Endothelial cell of umbilical vein (primary cell): ENCODE measurements at regions of chr17 and their contacts with region 1.

Region 1: DNA sequence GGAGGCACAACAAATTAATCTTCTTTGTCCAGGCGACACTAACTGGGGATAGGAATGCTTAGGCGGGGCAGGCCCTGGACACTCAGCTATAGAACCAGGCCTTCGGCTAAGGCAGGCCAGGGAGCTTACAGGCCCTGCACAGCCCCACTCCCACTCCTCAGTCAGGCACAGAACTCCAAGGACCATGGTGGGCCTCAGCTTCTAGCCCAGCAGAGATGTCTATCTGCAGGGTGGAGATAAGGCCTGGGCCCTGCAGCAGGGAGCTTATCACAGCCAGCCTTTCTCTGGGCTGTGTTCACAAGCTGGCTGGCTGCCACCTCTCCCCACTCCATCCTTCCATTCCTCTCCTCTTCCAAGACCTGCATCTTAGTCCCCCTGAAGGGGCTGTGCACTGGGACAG is 68.1 kb downstream of the TMEM132E start:
- DNase-seq: no peak
- H3K4me3 ChIP-seq: no peak overlapping the region
- H3K27ac ChIP-seq: no peak overlapping the region
- H3K4me1 ChIP-seq: no peaks in the 10 kb centered on the region
- H3K27me3 ChIP-seq: no peaks in the 10 kb centered on the region
- CTCF ChIP-seq: no peak
- POLR2A ChIP-seq: no peak

Region 2: GRCh38 chr17:34673995-34674870 is 26.7 kb after region 1 on chr17:
- CTCF ChIA-PET with region 1: no interaction called
- POLR2A ChIA-PET with region 1: no interaction called
- dilution Hi-C with region 1: no loop called
- intact Hi-C with region 1: loop called (anchors 2 kb)
- DNase-seq: no peak
- H3K4me3 ChIP-seq: no peak overlapping the region
- H3K27ac ChIP-seq: no peak overlapping the region
- H3K4me1 ChIP-seq: no peaks in the 10 kb centered on the region
- H3K27me3 ChIP-seq: no peaks in the 10 kb centered on the region
- CTCF ChIP-seq: no peak
- POLR2A ChIP-seq: no peak